ENCODE measurements at regions of chrX and their contacts with region 1.

Region 1: GRCh38 chrX:12080265-12080664 is 58.0 kb upstream of the FRMPD4 start:
- DNase-seq: no peak
- ATAC-seq: no peak
- H3K4me3 ChIP-seq: no peak overlapping the region
- H3K4me3 Mint-ChIP-seq: no peak overlapping the region
- H3K27ac ChIP-seq: no peak overlapping the region
- H3K27ac Mint-ChIP-seq: no peak overlapping the region
- H3K4me1 ChIP-seq: no peaks in the 10 kb centered on the region
- H3K4me1 Mint-ChIP-seq: no peaks in the 10 kb centered on the region
- H3K27me3 ChIP-seq: no peaks in the 10 kb centered on the region
- H3K27me3 Mint-ChIP-seq: peaks cover 0 to 8% (median 4%) of the 10 kb centered on the region in 5 donors

Region 2: DNA sequence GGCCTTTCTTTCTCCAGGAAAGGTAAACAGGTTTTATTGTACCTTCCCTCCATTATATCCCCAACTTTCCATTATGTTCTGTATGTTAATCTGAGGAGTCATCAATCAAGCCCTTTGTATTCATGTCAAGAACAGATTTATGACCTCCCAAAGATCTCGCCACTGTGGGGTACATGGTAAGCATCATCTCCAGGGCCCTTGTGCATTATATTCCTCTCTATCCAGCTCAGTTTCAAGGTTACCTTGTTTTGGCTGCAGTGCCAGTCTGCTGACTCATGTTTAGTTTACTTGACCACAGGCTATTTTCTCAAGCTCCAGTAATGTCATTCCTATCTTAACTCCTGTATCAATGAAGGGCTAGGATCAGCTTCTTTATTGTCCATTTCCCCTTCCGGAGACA is 67.0 kb before region 1 on chrX:
- CTCF ChIA-PET with region 1: no interaction called
- POLR2A ChIA-PET with region 1: no interaction called
- intact Hi-C with region 1: loop called in 1 of 2 experiments (anchors 10 kb)
- DNase-seq: no peak
- ATAC-seq: no peak
- H3K4me3 ChIP-seq: no peak overlapping the region
- H3K4me3 Mint-ChIP-seq: no peak overlapping the region
- H3K27ac ChIP-seq: no peak overlapping the region
- H3K27ac Mint-ChIP-seq: no peak overlapping the region
- H3K4me1 ChIP-seq: no peaks in the 10 kb centered on the region
- H3K4me1 Mint-ChIP-seq: no peaks in the 10 kb centered on the region
- H3K27me3 ChIP-seq: no peaks in the 10 kb centered on the region
- H3K27me3 Mint-ChIP-seq: no peaks in the 10 kb centered on the region

Region 3: DNA sequence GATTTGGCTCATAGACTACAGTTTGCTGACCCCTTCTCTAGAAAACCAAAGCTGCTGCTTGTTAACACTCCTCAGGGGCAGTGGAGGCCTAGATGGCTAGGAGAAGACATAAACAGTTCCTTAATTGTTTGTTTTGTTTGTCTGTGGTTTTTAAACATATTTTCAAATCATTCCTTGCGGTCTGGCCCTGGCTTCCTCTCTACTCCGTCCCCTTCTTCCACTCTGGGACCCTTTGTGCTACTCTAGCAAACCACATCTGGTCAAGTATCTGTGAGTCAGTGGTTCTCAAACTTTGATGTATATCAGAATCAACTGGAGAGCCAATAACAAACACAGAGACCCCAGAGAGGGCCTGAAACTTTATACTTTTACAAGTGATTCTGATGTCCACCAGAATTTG is 94.1 kb after region 1 on chrX:
- CTCF ChIA-PET with region 1: no interaction called
- POLR2A ChIA-PET with region 1: no interaction called
- intact Hi-C with region 1: no loop called
- DNase-seq: no peak
- ATAC-seq: no peak
- H3K4me3 ChIP-seq: no peak overlapping the region
- H3K4me3 Mint-ChIP-seq: no peak overlapping the region
- H3K27ac ChIP-seq: no peak overlapping the region
- H3K27ac Mint-ChIP-seq: no peak overlapping the region
- H3K4me1 ChIP-seq: no peaks in the 10 kb centered on the region
- H3K4me1 Mint-ChIP-seq: no peaks in the 10 kb centered on the region
- H3K27me3 ChIP-seq: no peaks in the 10 kb centered on the region
- H3K27me3 Mint-ChIP-seq: peaks cover 0 to 9% (median 4%) of the 10 kb centered on the region in 5 donors

Region 4: DNA sequence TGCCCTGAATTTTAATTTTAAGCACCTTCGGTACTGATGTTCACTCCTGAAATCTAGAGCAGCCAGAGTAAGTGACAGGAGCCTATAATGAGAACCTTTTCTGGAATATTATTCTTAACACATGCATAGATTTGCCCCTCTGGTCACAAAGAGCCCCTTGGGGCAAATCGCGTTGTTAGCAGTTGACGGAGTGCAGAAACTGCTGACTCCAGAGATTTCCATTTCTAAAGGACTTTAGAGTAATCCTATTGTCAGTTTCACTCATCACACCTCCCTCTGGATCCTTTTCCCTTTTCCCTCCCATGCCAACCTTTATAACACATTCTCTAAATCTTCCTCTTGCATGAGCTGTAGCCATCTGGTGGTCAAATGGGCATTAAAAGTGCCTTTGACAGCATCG is 446.0 kb after region 1 on chrX:
- CTCF ChIA-PET with region 1: no interaction called
- POLR2A ChIA-PET with region 1: no interaction called
- intact Hi-C with region 1: no loop called
- DNase-seq: no peak
- ATAC-seq: no peak
- H3K4me3 ChIP-seq: no peak overlapping the region
- H3K4me3 Mint-ChIP-seq: no peak overlapping the region
- H3K27ac ChIP-seq: no peak overlapping the region
- H3K27ac Mint-ChIP-seq: no peak overlapping the region
- H3K4me1 ChIP-seq: no peaks in the 10 kb centered on the region
- H3K4me1 Mint-ChIP-seq: no peaks in the 10 kb centered on the region
- H3K27me3 ChIP-seq: no peaks in the 10 kb centered on the region
- H3K27me3 Mint-ChIP-seq: peaks cover 0 to 6% (median 4%) of the 10 kb centered on the region in 5 donors

Region 5: DNA sequence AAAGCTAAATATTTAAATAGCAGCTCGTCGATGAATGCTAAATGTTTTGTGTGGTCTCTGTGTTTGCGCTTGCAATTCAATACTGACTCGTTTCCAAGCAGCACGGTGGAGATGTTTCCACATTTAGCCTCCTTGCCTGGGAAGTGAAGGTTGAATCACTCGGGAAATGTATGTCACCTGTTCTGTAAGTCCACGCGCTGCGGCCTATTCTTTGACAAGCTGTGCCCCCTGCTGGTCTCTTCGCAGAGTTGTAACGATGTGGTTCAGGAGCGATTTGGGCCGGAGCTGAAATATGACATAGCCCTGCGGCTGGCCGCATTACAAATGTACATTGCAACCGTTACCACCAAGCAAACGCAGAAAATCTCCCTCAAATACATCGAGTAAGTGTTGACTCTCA is 621.4 kb after region 1 on chrX:
- CTCF ChIA-PET with region 1: no interaction called
- POLR2A ChIA-PET with region 1: no interaction called
- intact Hi-C with region 1: loop called in 1 of 2 experiments (anchors 2 kb)
- DNase-seq: peak in 2 of 9 donors; percentile 5 to 21
- ATAC-seq: no peak
- H3K4me3 ChIP-seq: no peak overlapping the region
- H3K4me3 Mint-ChIP-seq: no peak overlapping the region
- H3K27ac ChIP-seq: no peak overlapping the region
- H3K27ac Mint-ChIP-seq: peak overlapping the region in 1 of 9 donors; percentile 60
- H3K4me1 ChIP-seq: no peaks in the 10 kb centered on the region
- H3K4me1 Mint-ChIP-seq: peaks cover 0 to 4% (median 0%) of the 10 kb centered on the region in 7 donors
- H3K27me3 ChIP-seq: no peaks in the 10 kb centered on the region
- H3K27me3 Mint-ChIP-seq: peaks cover 5 to 14% (median 9%) of the 10 kb centered on the region in 5 donors